ENCODE measurements at regions of chr5 and their contacts with region 1.

Region 1: GRCh38 chr5:73519531-73520283 is 21.5 kb downstream of the BTF3 start:
- DNase-seq: peak in 4 of 5 donors; percentile 28 to 59 (median 49)
- ATAC-seq: peak in 3 of 4 donors; percentile 85 to 93 (median 91)
- H3K4me3 ChIP-seq: no peak overlapping the region
- H3K27ac ChIP-seq: no peak overlapping the region
- H3K4me1 ChIP-seq: peaks cover 0 to 3% (median 0%) of the 10 kb centered on the region in 12 donors
- H3K27me3 ChIP-seq: no peaks in the 10 kb centered on the region
- CTCF ChIP-seq: peak; percentile 48 to 71 (median 64)
- POLR2A ChIP-seq: no peak

Region 2: DNA sequence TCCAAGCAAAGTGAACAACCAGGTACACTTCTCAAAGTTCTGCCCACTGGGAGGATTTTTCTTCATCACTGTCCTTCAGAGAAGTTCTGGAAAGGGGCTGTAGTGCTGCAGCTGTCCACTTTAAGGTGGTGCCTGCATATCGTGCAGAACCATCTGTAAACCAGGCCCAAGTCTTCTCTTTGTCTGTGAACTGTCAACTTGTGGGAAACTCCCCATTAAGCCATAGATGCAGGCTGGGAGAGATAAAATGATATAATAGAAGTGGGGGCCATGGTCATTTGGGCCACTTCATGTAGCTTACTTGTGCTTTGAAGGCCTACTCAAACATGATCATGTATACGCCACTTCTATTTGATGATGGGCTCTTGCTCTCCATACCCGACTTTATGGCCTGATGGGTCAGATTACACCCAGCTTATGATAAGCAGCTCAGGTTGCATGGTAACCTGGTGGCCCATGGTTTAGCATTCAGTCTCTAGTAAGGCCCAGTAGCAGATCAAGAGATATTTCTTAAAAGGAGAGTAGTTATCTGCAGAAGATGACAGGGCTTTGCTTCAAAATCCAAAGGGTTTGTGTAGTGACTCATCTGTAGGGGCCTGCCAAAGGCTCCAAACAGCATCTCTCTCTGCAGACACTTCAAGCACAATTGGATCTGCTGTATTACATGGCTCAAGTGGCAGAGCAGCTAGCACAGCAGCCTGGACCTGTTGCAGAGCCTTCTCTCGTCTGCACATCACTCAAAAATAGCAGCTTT is 37.1 kb before region 1 on chr5:
- intact Hi-C with region 1: no loop called
- DNase-seq: no peak
- ATAC-seq: no peak
- H3K4me3 ChIP-seq: no peak overlapping the region
- H3K27ac ChIP-seq: no peak overlapping the region
- H3K4me1 ChIP-seq: no peaks in the 10 kb centered on the region
- H3K27me3 ChIP-seq: peaks cover 0 to 16% (median 0%) of the 10 kb centered on the region in 9 donors
- CTCF ChIP-seq: no peak
- POLR2A ChIP-seq: no peak

Region 3: GRCh38 chr5:73540192-73540591 is 20.5 kb after region 1 on chr5:
- intact Hi-C with region 1: loop called in 5 of 10 experiments (anchors 1 to 2 kb)
- DNase-seq: no peak
- ATAC-seq: no peak
- H3K4me3 ChIP-seq: no peak overlapping the region
- H3K27ac ChIP-seq: no peak overlapping the region
- H3K4me1 ChIP-seq: peaks cover 0 to 8% (median 0%) of the 10 kb centered on the region in 12 donors
- H3K27me3 ChIP-seq: no peaks in the 10 kb centered on the region
- CTCF ChIP-seq: no peak
- POLR2A ChIP-seq: no peak

Measured in heart left ventricle (tissue), 16 donors.